Tibial artery (tissue), 4 donors: ENCODE measurements at regions of chrX and their contacts with region 1.

Region 1: DNA sequence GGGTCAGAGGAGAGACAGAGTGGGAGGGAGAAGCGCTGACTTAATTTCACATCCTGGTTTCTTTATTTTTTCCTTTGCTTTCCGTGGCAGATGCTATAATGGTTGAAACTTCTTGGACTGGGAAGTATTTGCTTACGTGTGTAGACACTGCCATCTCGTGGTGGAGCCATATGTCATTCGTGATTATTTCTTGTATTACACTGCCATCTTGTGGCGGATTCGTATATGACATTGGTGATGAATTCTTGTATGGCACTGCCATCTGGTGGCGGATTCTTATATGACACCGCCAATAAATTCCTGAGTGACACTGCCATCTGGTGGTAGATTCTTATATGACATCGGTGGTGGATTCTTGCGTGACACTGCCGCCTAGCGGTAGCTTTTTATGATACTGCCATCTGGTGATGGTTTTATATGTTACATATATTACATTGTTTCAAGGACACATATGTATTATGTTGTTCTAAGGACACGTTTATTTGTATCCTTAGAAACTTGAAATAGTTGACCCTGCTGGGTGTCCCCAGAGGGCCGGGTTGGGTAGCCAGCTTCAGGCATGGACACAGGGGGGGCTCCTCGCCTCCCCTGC is 37.3 kb upstream of the CLCN4 start:
- DNase-seq: peak in 1 of 2 donors; percentile 71
- H3K4me3 ChIP-seq: no peak overlapping the region
- H3K27ac ChIP-seq: peak overlapping the region; percentile 14 to 53
- H3K4me1 ChIP-seq: peaks cover 0 to 24% (median 5%) of the 10 kb centered on the region in 4 donors
- H3K27me3 ChIP-seq: no peaks in the 10 kb centered on the region
- CTCF ChIP-seq: peak; percentile 95 to 100

Region 2: GRCh38 chrX:9885150-9885549 is 234.3 kb before region 1 on chrX:
- intact Hi-C with region 1: loop called (anchors 10 kb)
- DNase-seq: peak in 1 of 2 donors; percentile 29
- H3K4me3 ChIP-seq: no peak overlapping the region
- H3K27ac ChIP-seq: no peak overlapping the region
- H3K4me1 ChIP-seq: no peaks in the 10 kb centered on the region
- H3K27me3 ChIP-seq: no peaks in the 10 kb centered on the region
- CTCF ChIP-seq: peak; percentile 29 to 38

Region 3: GRCh38 chrX:9995855-9996339 is 123.6 kb before region 1 on chrX:
- intact Hi-C with region 1: loop called (anchors 2 kb)
- DNase-seq: peak; percentile 79 to 85
- H3K4me3 ChIP-seq: no peak overlapping the region
- H3K27ac ChIP-seq: no peak overlapping the region
- H3K4me1 ChIP-seq: peaks cover 0 to 4% (median 0%) of the 10 kb centered on the region in 4 donors
- H3K27me3 ChIP-seq: no peaks in the 10 kb centered on the region
- CTCF ChIP-seq: peak; percentile 80 to 98

Region 4: DNA sequence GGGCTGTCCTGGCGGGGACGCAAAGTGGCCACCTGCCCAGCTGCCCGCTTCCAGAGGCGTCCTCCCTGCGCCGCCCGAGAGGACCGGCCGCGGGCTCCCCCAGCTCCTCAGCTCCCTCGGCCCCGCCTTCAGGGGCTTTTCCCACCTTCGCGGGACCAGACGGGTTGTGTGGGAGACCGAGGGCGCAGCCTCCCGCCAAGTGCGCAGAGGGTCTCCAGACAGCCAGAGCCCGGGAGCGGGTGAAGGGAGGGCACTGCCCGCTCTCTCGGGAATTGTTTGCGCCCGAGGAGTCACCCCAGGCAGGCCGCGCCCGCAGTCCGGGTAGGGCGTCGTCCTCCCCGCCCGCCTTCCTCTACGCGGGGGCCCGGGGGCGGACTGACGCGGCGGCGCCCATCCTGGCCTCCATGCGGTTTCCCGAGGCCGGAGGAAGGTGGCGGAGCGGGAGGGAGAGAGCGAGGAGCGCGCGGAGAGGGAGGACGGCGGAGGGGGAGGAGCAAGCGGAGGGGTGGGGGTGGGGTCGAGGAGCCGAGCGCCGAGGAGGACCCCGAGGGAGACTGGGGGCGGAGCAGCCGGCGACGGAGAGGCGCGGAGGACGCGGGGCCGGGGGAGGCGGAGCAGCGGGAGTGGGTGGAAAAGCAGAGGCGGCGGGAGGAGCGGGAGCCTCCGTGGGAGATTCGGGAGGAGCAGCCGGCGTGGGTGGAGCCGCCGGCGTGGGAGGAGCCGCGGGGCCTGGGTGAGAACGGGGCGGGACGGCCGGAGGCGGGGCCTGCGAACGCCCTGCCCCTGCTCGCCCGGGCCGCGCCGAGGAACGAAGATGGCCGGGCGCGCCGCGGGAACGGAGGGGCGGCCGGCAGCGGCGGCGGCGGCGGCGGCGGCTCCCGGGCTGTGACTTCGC is 104.8 kb before region 1 on chrX:
- intact Hi-C with region 1: loop called (anchors 5 kb)
- DNase-seq: peak; percentile 85 to 93
- H3K4me3 ChIP-seq: peak overlapping the region; percentile 63 to 72
- H3K27ac ChIP-seq: peak overlapping the region; percentile 90 to 94
- H3K4me1 ChIP-seq: peaks cover 0 to 28% (median 7%) of the 10 kb centered on the region in 4 donors
- H3K27me3 ChIP-seq: no peaks in the 10 kb centered on the region
- CTCF ChIP-seq: no peak

Region 5: GRCh38 chrX:11137543-11138139 is 1018.1 kb after region 1 on chrX:
- intact Hi-C with region 1: no loop called
- DNase-seq: no peak
- H3K4me3 ChIP-seq: no peak overlapping the region
- H3K27ac ChIP-seq: no peak overlapping the region
- H3K4me1 ChIP-seq: no peaks in the 10 kb centered on the region
- H3K27me3 ChIP-seq: no peaks in the 10 kb centered on the region
- CTCF ChIP-seq: peak; percentile 56 to 61